Activated CD4-positive, alpha-beta T cell treated with anti-CD3 and anti-CD28 coated beads, Interleukin-2, amount 10 ng/mL, durations not matched to agents 24 days and 14 days (primary cell): ENCODE measurements at regions of chr1 and their contacts with region 1.

Region 1: GRCh38 chr1:90834886-90835660 is 118.0 kb upstream of the BARHL2 start:
- DNase-seq: no peak
- H3K4me3 Mint-ChIP-seq: no peak overlapping the region
- H3K27ac Mint-ChIP-seq: no peak overlapping the region
- H3K4me1 Mint-ChIP-seq: peaks cover 11% of the 10 kb centered on the region
- H3K27me3 Mint-ChIP-seq: peaks cover 89% of the 10 kb centered on the region

Region 2: DNA sequence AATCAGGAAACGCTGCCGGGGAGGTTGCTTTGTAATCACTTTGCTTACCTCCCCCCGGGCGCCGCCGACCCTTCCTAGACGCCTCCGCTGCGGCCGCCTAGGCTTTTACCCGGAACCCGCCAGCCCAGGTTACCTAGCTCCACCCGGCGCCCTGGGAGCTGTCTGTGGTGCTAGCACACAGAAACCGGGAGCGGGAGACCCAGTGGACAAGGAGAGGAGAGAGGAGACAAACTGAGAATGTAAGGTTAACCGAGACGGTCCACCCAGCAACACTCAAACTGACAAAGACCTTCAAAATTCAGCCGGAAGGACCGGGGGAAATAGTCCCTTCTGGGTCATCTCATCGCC is 127.7 kb before region 1 on chr1:
- intact Hi-C with region 1: loop called (anchors 5 kb)
- DNase-seq: peak; percentile 62
- H3K4me3 Mint-ChIP-seq: no peak overlapping the region
- H3K27ac Mint-ChIP-seq: no peak overlapping the region
- H3K4me1 Mint-ChIP-seq: peaks cover 2% of the 10 kb centered on the region
- H3K27me3 Mint-ChIP-seq: peaks cover 77% of the 10 kb centered on the region

Region 3: GRCh38 chr1:90721210-90722194 is 113.6 kb before region 1 on chr1:
- intact Hi-C with region 1: loop called (anchors 2 kb)
- DNase-seq: peak; percentile 88
- H3K4me3 Mint-ChIP-seq: no peak overlapping the region
- H3K27ac Mint-ChIP-seq: no peak overlapping the region
- H3K4me1 Mint-ChIP-seq: peaks cover 38% of the 10 kb centered on the region
- H3K27me3 Mint-ChIP-seq: peaks cover 88% of the 10 kb centered on the region

Region 4: GRCh38 chr1:90964444-90965035 is 129.5 kb after region 1 on chr1:
- intact Hi-C with region 1: loop called (anchors 1 kb)
- DNase-seq: no peak
- H3K4me3 Mint-ChIP-seq: no peak overlapping the region
- H3K27ac Mint-ChIP-seq: no peak overlapping the region
- H3K4me1 Mint-ChIP-seq: peaks cover 9% of the 10 kb centered on the region
- H3K27me3 Mint-ChIP-seq: no peaks in the 10 kb centered on the region